ENCODE measurements at regions of chr11 and their contacts with region 1.

Region 1: GRCh38 chr11:12052676-12053605 is 44.5 kb upstream of the DKK3 start:
- DNase-seq: peak; percentile 42
- ATAC-seq: peak; percentile 77
- H3K4me3 Mint-ChIP-seq: no peak overlapping the region
- H3K27ac Mint-ChIP-seq: no peak overlapping the region
- H3K4me1 Mint-ChIP-seq: peaks cover 8% of the 10 kb centered on the region; the same call in 1 of the 2 replicates
- H3K27me3 Mint-ChIP-seq: no peaks in the 10 kb centered on the region
- CTCF ChIP-seq: 0 out of 2 replicates have a peak, but pooled peaks have one; percentile 21

Region 2: DNA sequence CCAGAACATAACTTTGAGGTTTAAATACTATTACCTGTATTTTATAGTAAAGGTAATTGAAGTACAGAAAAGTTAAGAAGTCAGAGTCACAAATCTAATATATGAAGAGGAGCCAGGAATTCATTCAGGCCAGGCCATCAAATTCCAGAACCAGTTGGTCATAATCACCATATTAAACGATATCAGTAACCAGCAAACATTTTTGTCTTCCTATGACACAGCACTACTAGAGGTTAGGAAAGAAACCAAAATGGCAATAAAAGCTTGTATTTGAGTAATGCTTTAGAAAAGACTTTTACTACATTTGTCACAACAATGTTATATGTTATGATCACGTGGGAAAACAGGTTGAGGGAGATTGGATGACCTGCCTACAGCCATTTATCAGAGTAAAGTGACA is 106.8 kb before region 1 on chr11:
- CTCF ChIA-PET with region 1: no interaction called
- POLR2A ChIA-PET with region 1: no interaction called
- DNase-seq: no peak
- ATAC-seq: no peak
- H3K4me3 Mint-ChIP-seq: no peak overlapping the region
- H3K27ac Mint-ChIP-seq: no peak overlapping the region
- H3K4me1 Mint-ChIP-seq: no peaks in the 10 kb centered on the region
- H3K27me3 Mint-ChIP-seq: no peaks in the 10 kb centered on the region
- CTCF ChIP-seq: no peak

Region 3: DNA sequence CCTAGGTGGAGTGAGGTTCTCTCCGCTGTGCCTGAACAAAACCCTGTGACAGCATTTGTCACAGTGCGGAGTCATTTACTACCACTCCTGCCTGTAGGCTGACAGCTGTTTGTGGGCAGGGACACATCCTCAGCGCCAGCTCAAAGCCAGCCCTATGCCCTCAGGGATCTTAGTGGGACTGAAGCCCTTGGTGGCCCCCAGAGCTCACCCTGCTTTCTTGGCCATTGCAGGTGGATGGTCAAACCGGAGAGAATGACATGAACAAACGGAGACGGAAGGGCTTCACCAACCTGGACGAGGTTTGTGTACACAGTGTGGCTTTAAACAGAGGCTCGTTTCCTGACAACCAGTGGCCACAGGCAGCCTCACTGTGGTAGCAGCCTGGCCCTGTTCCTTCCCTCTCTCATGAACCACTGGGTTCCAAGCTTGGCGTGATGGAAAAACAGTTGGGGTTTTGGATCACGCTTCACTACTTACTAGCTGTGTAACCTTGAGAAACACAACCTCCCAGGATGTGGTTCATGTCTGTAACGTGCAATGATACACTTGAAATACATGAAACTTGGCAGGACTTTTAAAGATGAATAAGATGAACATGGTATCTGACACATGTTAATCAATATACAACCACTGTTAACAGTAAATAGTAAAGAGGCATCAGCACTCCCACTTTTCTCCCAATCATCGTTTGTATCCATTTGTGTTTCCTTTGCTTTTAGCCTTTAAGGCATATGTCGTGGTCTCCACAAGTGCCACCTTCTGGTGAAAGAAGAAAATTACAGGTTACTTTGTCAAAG is 183.2 kb after region 1 on chr11:
- CTCF ChIA-PET with region 1: interaction called, 13 read pairs
- POLR2A ChIA-PET with region 1: no interaction called
- DNase-seq: no peak
- ATAC-seq: peak; percentile 70
- H3K4me3 Mint-ChIP-seq: no peak overlapping the region
- H3K27ac Mint-ChIP-seq: no peak overlapping the region
- H3K4me1 Mint-ChIP-seq: peaks cover 3% of the 10 kb centered on the region; the same call in 1 of the 2 replicates
- H3K27me3 Mint-ChIP-seq: no peaks in the 10 kb centered on the region; the same call in 1 of the 2 replicates
- CTCF ChIP-seq: peak; percentile 51; the same call in 1 of the 2 replicates

Region 4: GRCh38 chr11:12281571-12282478 is 228.9 kb after region 1 on chr11:
- CTCF ChIA-PET with region 1: interaction called, 47 read pairs
- POLR2A ChIA-PET with region 1: no interaction called
- DNase-seq: peak; percentile 89
- ATAC-seq: peak; percentile 88
- H3K4me3 Mint-ChIP-seq: no peak overlapping the region
- H3K27ac Mint-ChIP-seq: no peak overlapping the region
- H3K4me1 Mint-ChIP-seq: peaks cover 5% of the 10 kb centered on the region; the same call in 1 of the 2 replicates
- H3K27me3 Mint-ChIP-seq: no peaks in the 10 kb centered on the region
- CTCF ChIP-seq: peak; percentile 96

Measured in WTC11 (cell line).